ENCODE measurements at regions of chr2 and their contacts with region 1.

Region 1: GRCh38 chr2:15577071-15577735 is 14.5 kb upstream of the DDX1 start:
- DNase-seq: peak; percentile 92
- ATAC-seq: peak; percentile 98
- H3K4me3 Mint-ChIP-seq: no peak overlapping the region
- H3K27ac Mint-ChIP-seq: no peak overlapping the region
- H3K4me1 Mint-ChIP-seq: no peaks in the 10 kb centered on the region
- H3K27me3 Mint-ChIP-seq: no peaks in the 10 kb centered on the region

Region 2: DNA sequence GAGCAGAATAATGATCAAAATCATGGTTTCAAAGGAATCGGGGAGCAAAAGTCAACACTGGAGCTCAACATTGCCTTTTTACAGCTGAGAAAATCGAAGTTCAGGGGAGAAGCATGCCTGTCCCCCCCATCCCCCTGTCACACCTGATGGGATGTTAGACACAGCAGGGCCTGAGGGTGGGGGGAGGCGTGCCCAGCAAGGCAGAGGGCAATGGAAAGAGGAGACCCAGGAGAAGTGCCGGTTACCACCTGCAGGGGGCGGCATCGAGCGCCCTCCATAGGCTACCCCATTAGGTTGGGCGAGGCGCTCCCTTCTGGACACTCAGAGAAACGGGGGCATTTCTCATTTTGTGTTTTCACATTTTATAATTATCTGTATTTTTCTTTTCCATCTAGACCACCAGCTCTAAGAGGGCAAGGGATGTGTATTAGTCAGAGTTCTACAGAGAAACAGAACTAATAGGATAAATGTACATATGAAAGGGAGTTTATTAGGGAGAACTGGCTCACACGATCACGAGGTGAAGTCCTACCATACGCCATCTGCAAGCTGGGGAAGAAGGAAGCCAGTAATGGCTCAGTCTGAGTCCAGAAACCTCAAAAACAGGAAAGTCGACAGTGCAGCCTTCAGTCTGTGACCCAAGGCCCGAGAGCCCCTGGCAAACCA is 673.4 kb before region 1 on chr2:
- CTCF ChIA-PET with region 1: interaction called, 10 read pairs
- DNase-seq: peak; percentile 71
- ATAC-seq: peak; percentile 86
- H3K4me3 Mint-ChIP-seq: no peak overlapping the region
- H3K27ac Mint-ChIP-seq: no peak overlapping the region
- H3K4me1 Mint-ChIP-seq: no peaks in the 10 kb centered on the region
- H3K27me3 Mint-ChIP-seq: no peaks in the 10 kb centered on the region

Region 3: DNA sequence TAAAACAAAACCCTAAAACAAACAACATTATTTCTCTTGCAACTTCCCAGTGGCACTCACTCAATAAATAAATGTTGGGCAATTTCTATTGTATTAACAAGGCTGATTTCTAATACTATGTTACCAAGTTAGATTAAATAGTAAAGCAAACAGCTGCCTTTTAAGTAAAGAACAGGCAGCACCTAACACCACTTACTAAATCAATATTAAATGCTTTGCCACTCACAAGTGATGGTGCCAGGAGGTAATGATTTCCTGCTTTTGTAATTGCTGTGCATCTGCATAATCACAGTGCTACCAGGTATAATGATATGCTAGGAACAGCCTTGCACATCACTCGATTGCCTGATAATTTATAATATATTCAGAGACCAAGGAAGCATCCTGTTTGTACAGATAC is 292.6 kb before region 1 on chr2:
- CTCF ChIA-PET with region 1: no interaction called
- DNase-seq: no peak
- ATAC-seq: no peak
- H3K4me3 Mint-ChIP-seq: no peak overlapping the region
- H3K27ac Mint-ChIP-seq: no peak overlapping the region
- H3K4me1 Mint-ChIP-seq: no peaks in the 10 kb centered on the region
- H3K27me3 Mint-ChIP-seq: no peaks in the 10 kb centered on the region

Region 4: GRCh38 chr2:15560988-15561573 is 16.1 kb before region 1 on chr2 and contains the start of gene NBAS:
- CTCF ChIA-PET with region 1: interaction called, 16 read pairs
- DNase-seq: peak; percentile 89
- ATAC-seq: peak; percentile 87
- H3K4me3 Mint-ChIP-seq: peak within 1 kb of the TSS; percentile 99
- H3K27ac Mint-ChIP-seq: peak within 1 kb of the TSS; percentile 96
- H3K4me1 Mint-ChIP-seq: peaks cover 36% of the 10 kb centered on the region
- H3K27me3 Mint-ChIP-seq: peaks cover 10% of the 10 kb centered on the region
- total RNA-seq, gene NBAS: 32.9 to 34.0 TPM

Region 5: DNA sequence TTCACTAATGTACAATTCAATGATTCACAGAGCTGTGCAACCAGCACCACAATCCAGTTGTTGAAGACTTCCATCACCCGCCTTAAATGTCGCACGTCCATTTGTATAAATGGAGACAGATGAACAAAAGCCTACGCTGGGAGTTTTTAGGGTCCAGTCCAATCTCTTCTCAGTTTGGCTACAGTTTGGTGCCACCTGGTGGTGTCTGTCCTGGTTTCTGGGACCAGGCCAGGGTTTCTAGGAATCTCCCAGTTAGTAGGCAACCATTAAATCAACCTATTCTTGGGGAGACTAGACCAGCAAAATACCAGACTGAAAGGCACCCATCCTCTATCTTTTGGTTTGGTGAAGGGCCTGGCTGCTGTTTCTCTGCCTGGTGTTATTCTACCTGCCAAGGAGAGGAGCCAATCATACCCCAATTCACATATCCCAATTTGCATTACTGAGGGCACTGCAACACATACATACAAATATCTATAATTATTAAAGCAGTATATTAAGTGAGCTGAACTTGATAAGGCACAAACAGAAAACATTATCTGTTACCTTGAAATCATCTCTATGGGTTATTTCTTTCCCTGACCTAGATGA is 11.2 kb after region 1 on chr2:
- CTCF ChIA-PET with region 1: interaction called, 18 read pairs
- DNase-seq: peak; percentile 44
- ATAC-seq: no peak
- H3K4me3 Mint-ChIP-seq: no peak overlapping the region
- H3K27ac Mint-ChIP-seq: no peak overlapping the region
- H3K4me1 Mint-ChIP-seq: peaks cover 12% of the 10 kb centered on the region
- H3K27me3 Mint-ChIP-seq: no peaks in the 10 kb centered on the region

Region 6: DNA sequence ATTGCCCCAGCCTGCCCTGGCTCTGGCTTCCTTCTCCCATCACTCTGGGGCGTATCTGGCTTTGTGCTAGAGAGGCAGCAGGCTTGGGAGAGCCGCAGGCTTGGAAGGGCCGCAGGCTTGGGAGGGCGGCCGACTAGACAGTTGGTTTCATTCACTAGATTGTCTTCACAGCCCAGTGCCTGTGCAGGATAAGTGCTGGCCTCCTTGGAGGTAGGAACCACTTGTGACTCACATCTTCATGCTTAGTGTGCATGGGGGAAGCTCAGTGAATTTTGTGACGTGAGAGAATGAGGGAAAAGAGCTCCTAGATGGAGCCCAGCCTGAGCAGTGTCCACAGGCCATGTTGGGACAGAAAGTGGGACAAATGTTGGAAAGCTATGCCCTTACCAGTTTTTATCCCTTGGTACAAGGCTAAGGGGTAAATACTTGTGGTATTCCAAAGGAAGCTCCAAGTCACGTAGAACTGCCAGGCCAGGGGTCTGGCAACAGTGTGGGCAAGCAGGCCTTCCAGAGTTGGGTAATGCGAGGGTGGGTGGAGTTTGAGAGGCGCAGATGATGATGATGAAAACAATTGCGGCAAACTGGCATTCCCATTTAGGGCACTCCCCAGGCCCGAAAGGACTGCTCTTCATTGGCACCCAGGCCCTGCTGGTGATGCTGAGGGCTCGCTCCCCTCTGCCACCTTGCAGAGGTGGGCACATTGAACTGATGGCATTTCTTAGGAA is 114.5 kb after region 1 on chr2:
- CTCF ChIA-PET with region 1: no interaction called
- DNase-seq: no peak
- ATAC-seq: no peak
- H3K4me3 Mint-ChIP-seq: no peak overlapping the region
- H3K27ac Mint-ChIP-seq: no peak overlapping the region
- H3K4me1 Mint-ChIP-seq: no peaks in the 10 kb centered on the region
- H3K27me3 Mint-ChIP-seq: peaks cover 9% of the 10 kb centered on the region